ENCODE measurements at regions of chr2 and their contacts with region 1.

Region 1: DNA sequence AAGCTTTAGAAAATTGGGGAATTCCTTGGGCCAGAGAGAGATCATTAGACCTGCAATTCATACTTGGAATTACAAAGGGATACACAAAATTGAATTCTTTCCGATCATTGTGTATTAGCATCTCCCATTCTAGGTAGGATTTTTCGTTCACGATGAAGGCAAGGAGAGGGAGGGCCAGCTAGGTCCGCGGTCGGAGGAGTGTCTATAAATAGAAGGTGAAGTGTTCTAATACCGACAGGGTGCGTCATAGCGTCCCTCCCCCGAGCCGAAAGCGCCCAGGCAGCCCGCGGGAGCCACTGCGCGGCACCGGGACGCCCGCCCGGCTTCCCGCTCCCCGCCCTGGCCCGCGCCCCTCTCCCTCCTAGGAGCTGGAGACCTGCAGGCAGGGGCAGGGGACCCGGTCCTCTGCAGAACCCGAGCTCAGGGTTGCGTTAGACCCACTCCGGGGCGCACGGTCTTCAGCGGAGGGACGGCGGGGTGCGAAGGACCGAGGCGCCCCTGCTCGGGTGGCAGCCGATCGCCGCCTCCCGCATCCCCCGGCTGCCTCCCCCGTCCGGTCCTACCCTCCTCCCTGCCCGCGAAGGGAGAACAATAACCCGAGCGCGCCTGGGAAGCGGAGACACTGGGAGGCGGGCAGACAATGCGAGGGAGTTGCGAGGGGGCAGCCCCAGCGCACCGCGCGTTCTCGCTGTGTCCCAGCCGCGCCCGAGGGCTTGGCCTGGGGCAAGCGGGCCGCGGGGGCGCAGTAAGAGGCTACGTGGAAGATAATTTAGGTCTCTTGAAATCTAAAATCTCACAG is 114.2 kb upstream of the SERTAD2 start:
- DNase-seq: peak; percentile 93
- H3K4me3 Mint-ChIP-seq: peak overlapping the region; percentile 92
- H3K27ac Mint-ChIP-seq: peak overlapping the region; percentile 97
- H3K4me1 Mint-ChIP-seq: peaks cover 40% of the 10 kb centered on the region
- H3K27me3 Mint-ChIP-seq: peaks cover 2% of the 10 kb centered on the region

Region 2: GRCh38 chr2:64644177-64645004 is 123.5 kb before region 1 on chr2:
- intact Hi-C with region 1: loop called (anchors 2 kb)
- DNase-seq: peak; percentile 88
- H3K4me3 Mint-ChIP-seq: peak overlapping the region; percentile 84
- H3K27ac Mint-ChIP-seq: peak overlapping the region; percentile 92
- H3K4me1 Mint-ChIP-seq: peaks cover 77% of the 10 kb centered on the region
- H3K27me3 Mint-ChIP-seq: no peaks in the 10 kb centered on the region

Region 3: DNA sequence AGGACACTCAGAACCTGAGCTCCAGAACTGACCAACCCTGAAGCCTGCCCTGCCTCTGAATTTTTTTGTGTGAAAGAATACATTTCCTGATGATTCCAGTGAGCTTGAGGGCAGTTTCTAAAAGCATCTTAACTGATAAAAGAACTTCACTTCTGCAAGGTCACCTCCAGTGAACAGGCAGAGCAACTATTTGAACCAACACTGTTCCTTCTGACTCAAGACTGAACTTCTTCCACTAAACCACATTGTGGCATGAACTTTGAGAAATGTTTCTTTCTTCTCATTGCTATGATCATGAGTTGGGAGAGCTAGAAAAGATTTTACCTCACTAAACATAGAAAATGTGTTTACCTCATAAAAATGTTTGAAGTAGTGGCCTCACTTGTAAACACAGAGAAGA is 30.3 kb before region 1 on chr2:
- intact Hi-C with region 1: loop called (anchors 1 kb)
- DNase-seq: peak; percentile 73
- H3K4me3 Mint-ChIP-seq: peak overlapping the region; percentile 72
- H3K27ac Mint-ChIP-seq: peak overlapping the region; percentile 77
- H3K4me1 Mint-ChIP-seq: peaks cover 30% of the 10 kb centered on the region
- H3K27me3 Mint-ChIP-seq: no peaks in the 10 kb centered on the region

Region 4: DNA sequence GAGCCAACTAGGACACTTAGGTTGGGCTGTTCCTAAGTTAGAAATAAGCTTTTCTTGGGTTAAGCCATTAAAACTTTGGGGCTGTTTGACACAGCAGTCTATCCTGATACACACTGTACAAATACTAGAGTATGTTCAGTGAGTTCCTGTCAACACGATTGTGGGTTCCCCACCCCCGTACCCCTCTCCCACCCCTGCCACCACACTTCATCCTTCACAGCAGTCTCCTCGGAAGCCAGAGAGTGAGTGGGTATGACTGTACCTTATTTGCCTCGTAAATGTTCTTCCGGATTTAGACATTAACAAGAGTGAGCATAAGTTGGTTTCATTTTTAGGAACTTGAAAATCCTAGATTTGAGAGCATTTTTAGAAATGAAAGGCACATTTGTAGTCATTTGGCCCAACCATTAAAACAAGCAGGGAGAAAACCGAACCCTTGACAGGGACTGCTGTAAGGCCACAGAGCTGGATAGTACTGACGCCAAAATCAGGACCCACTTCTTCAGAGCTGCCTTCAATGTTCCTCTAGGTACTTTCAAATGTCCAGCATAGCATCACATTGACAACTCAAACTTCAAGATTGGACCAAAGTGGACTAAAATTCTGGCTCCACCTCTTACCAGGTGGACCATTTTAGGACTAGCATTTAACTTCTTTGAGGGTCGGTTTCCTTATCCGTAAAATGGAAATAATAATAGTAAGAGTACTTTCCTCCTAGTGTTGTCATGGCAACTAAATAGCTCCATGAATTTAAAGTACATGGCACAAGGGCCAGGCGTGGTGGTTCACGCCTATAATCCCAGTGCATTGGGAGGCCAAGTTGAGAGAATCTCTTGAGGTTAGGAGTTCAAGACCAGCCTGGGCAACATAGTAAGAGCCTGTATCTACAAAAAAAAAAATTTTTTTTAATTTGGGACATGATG is 52.2 kb after region 1 on chr2:
- intact Hi-C with region 1: loop called (anchors 1 kb)
- DNase-seq: peak; percentile 82
- H3K4me3 Mint-ChIP-seq: peak overlapping the region; percentile 65
- H3K27ac Mint-ChIP-seq: peak overlapping the region; percentile 82
- H3K4me1 Mint-ChIP-seq: peaks cover 23% of the 10 kb centered on the region
- H3K27me3 Mint-ChIP-seq: no peaks in the 10 kb centered on the region

Region 5: GRCh38 chr2:64865073-64865830 is 97.4 kb after region 1 on chr2:
- intact Hi-C with region 1: loop called (anchors 1 kb)
- DNase-seq: peak; percentile 91
- H3K4me3 Mint-ChIP-seq: peak overlapping the region; percentile 73
- H3K27ac Mint-ChIP-seq: no peak overlapping the region
- H3K4me1 Mint-ChIP-seq: peaks cover 3% of the 10 kb centered on the region
- H3K27me3 Mint-ChIP-seq: peaks cover 14% of the 10 kb centered on the region

Region 6: DNA sequence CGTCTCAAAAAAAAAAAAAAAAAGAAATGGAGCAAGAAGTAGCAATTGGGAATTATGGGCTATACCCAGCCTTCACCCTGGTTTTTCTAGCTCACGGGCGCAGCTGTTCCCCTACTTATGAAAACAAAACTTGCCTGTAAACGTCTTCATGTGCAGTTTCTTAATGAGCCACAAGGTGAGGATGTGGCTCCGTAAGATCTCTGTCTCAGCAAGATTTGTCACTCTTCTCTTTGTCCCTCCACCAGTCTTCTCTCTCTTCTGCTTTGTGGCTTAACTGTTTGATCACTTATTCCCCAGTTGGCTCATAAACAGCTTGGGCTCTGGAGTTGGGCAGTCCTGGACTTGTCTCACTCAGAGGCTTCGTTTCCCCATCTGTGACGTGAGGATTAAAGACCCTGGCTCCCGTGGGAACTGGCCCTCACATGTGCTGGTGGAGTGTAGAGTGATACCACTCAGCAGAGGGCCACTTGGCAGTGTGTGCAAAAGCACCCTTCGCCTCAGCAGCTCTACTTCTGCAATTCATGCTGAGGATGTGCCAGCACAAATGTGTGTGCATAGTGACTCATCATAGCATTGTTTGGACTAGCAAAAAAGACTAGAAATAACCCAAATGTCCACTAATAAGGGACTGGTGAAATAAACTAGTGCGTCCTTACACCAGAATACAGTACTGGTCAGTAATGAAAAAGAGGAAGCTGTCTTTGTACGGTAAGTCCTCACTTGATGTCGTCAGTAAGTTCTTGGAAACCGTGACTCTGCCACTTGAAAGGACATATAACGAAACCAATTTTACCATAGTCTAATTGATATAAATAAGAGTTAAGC is 297.1 kb after region 1 on chr2:
- intact Hi-C with region 1: no loop called
- DNase-seq: peak; percentile 87
- H3K4me3 Mint-ChIP-seq: no peak overlapping the region
- H3K27ac Mint-ChIP-seq: peak overlapping the region; percentile 16
- H3K4me1 Mint-ChIP-seq: peaks cover 22% of the 10 kb centered on the region
- H3K27me3 Mint-ChIP-seq: no peaks in the 10 kb centered on the region

Measured in activated CD4-positive, alpha-beta T cell treated with anti-CD3 and anti-CD28 coated beads, Interleukin-2, amount 10 ng/mL, durations not matched to agents 24 days and 14 days (primary cell).